ENCODE measurements at regions of chr4 and their contacts with region 1.

Region 1: GRCh38 chr4:57037982-57038604 is 59.4 kb downstream of the POLR2B start:
- ATAC-seq: peak; percentile 63 to 93 (median 79)
- H3K4me3 ChIP-seq: no peak overlapping the region
- H3K27ac ChIP-seq: no peak overlapping the region
- H3K4me1 ChIP-seq: peaks cover 0 to 4% of the 10 kb centered on the region in 2 donors

Region 2: DNA sequence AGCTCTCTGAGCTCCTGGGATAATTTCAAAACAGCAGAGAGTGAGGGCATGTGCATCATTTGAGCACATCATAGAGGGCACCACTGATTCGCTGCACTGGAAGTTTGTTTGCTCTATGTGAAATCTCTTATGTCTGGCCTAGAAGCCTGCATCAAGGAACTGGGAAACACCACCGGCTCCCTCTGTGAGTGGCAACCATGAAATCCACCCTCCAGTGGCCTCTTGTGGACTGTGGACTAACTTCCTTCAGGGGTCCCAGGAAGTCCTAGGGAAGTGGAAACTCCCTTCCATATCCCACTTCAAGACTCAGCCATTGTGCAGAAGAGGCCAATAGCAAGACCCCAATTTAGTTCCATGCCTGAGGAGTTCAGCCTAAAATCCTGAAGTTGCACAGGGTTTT is 120.1 kb after region 1 on chr4:
- in situ Hi-C with region 1: loop called in 2 of 9 experiments (anchors 10 kb)
- ATAC-seq: peak in 2 of 8 experiments; percentile 21 to 63
- H3K4me3 ChIP-seq: no peak overlapping the region
- H3K27ac ChIP-seq: no peak overlapping the region
- H3K4me1 ChIP-seq: peaks cover 0 to 4% of the 10 kb centered on the region in 2 donors

Region 3: GRCh38 chr4:57303012-57303751 is 265.1 kb after region 1 on chr4:
- in situ Hi-C with region 1: loop called in 1 of 9 experiments (anchors 25 kb)
- ATAC-seq: peak in 1 of 8 experiments; percentile 54
- H3K4me3 ChIP-seq: no peak overlapping the region
- H3K27ac ChIP-seq: no peak overlapping the region
- H3K4me1 ChIP-seq: peaks cover 0 to 4% of the 10 kb centered on the region in 2 donors

Region 4: GRCh38 chr4:57426779-57427395 is 388.8 kb after region 1 on chr4:
- in situ Hi-C with region 1: loop called in 1 of 9 experiments (anchors 25 kb)
- ATAC-seq: peak; percentile 57 to 97 (median 86)
- H3K4me3 ChIP-seq: no peak overlapping the region
- H3K27ac ChIP-seq: no peak overlapping the region
- H3K4me1 ChIP-seq: peaks cover 2 to 11% of the 10 kb centered on the region in 2 donors